Activated CD4-positive, alpha-beta T cell treated with anti-CD3 and anti-CD28 coated beads, Interleukin-2, amount 10 ng/mL, durations not matched to agents 24 days and 14 days (primary cell): ENCODE measurements at regions of chr14 and their contacts with region 1.

Region 1: GRCh38 chr14:106459971-106460730 is 933.8 kb downstream of the TMEM121 start:
- DNase-seq: peak; percentile 87
- H3K4me3 Mint-ChIP-seq: no peak overlapping the region
- H3K27ac Mint-ChIP-seq: no peak overlapping the region
- H3K4me1 Mint-ChIP-seq: no peaks in the 10 kb centered on the region
- H3K27me3 Mint-ChIP-seq: peaks cover 15% of the 10 kb centered on the region

Region 2: DNA sequence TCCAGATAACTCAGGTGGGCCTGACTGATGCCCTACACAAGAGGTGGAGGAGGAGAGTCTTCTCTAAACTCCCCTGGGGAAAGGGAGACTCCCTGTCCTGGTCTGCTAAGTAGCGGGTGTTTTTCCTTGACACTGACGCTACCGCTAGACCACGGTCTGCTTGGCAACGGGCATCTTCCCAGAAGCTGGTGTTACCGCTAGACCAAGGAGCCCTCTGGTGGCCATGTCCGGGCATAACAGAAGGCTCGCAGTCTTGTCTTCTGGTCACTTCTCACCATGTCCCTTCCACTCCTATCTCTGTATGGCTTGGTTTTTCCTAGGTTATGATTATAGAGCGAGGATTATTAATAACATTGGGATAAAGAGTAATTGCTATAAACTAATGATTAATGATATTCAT is 31.7 kb after region 1 on chr14:
- intact Hi-C with region 1: loop called (anchors 5 kb)
- DNase-seq: peak; percentile 70
- H3K4me3 Mint-ChIP-seq: no peak overlapping the region
- H3K27ac Mint-ChIP-seq: no peak overlapping the region
- H3K4me1 Mint-ChIP-seq: peaks cover 22% of the 10 kb centered on the region
- H3K27me3 Mint-ChIP-seq: peaks cover 7% of the 10 kb centered on the region

Region 3: GRCh38 chr14:106518054-106518943 is 58.1 kb after region 1 on chr14:
- intact Hi-C with region 1: loop called (anchors 1 kb)
- DNase-seq: peak; percentile 95
- H3K4me3 Mint-ChIP-seq: no peak overlapping the region
- H3K27ac Mint-ChIP-seq: no peak overlapping the region
- H3K4me1 Mint-ChIP-seq: peaks cover 9% of the 10 kb centered on the region
- H3K27me3 Mint-ChIP-seq: peaks cover 55% of the 10 kb centered on the region